Common myeloid progenitor, CD34-positive (primary cell): ENCODE measurements at regions of chr1 and their contacts with region 1.

Region 1: GRCh38 chr1:151294742-151295462 is 12.8 kb downstream of the ZNF687 start:
- DNase-seq: no peak
- H3K4me3 ChIP-seq: no peak overlapping the region
- H3K27ac ChIP-seq: no peak overlapping the region
- H3K4me1 ChIP-seq: no peaks in the 10 kb centered on the region
- H3K27me3 ChIP-seq: no peaks in the 10 kb centered on the region

Region 2: DNA sequence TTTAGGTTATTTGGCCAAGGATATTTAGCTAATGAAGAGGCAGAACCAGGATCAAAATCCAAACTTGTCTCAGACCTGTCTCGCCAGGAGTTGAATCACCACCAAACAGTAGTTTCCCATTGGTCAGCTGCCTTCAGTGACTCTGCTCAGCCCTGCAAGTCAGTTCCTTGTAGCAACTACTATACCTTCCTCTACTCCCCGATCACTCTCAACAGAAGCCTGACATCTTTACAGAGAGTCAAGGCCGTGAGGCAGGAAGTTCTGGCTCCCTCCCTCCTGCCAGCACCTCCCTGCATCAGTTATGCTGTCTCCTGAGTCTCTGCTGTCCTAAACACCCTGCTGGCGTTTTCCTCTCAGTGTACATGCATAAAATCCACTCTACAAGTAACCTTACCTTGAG is 27.1 kb before region 1 on chr1:
- CTCF ChIA-PET with region 1: no interaction called
- POLR2A ChIA-PET with region 1: no interaction called
- DNase-seq: no peak
- H3K4me3 ChIP-seq: no peak overlapping the region
- H3K27ac ChIP-seq: no peak overlapping the region
- H3K4me1 ChIP-seq: no peaks in the 10 kb centered on the region
- H3K27me3 ChIP-seq: no peaks in the 10 kb centered on the region

Region 3: GRCh38 chr1:151311589-151312331 is 16.9 kb after region 1 on chr1:
- CTCF ChIA-PET with region 1: interaction called, 42 read pairs
- POLR2A ChIA-PET with region 1: no interaction called
- DNase-seq: peak in 2 of 3 donors; percentile 38 to 43
- H3K4me3 ChIP-seq: no peak overlapping the region
- H3K27ac ChIP-seq: peak overlapping the region in 1 of 2 experiments; percentile 56
- H3K4me1 ChIP-seq: no peaks in the 10 kb centered on the region
- H3K27me3 ChIP-seq: no peaks in the 10 kb centered on the region